Activated naive CD4-positive, alpha-beta T cell treated with anti-CD3 and anti-CD28 coated beads, Interleukin-2, amount 10 ng/mL, durations not matched to agents 7 days and 5 days (primary cell): ENCODE measurements at regions of chr4 and their contacts with region 1.

Region 1: GRCh38 chr4:40325189-40326019 is 9.7 kb upstream of the CHRNA9 start:
- DNase-seq: peak; percentile 79
- H3K4me3 Mint-ChIP-seq: no peak overlapping the region
- H3K27ac Mint-ChIP-seq: no peak overlapping the region
- H3K4me1 Mint-ChIP-seq: peaks cover 38% of the 10 kb centered on the region
- H3K27me3 Mint-ChIP-seq: peaks cover 6% of the 10 kb centered on the region

Region 2: GRCh38 chr4:40056716-40057585 is 268.5 kb before region 1 on chr4 and contains the start of gene N4BP2:
- CTCF ChIA-PET with region 1: interaction called, 10 read pairs
- DNase-seq: peak; percentile 76
- H3K4me3 Mint-ChIP-seq: peak within 1 kb of the TSS; percentile 96
- H3K27ac Mint-ChIP-seq: peak within 1 kb of the TSS; percentile 98
- H3K4me1 Mint-ChIP-seq: peaks cover 44% of the 10 kb centered on the region
- H3K27me3 Mint-ChIP-seq: peaks cover 5% of the 10 kb centered on the region

Region 3: DNA sequence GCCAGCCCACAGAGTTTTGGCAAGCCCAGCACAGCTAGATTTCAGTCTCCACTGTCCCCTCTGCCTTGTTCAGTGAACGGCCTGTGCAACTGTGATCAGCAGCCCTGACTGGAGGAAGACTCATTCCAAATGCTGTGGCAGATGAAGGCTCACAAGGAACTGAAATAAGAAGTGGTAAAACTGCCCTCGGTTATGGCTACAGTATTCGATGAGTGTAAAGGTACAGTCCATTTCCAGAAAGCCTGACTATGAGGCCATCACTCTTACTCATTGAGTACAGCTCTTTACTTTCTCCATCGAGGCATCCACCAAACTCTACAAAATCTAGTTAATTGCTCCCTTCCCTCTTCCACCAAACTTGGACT is 59.5 kb before region 1 on chr4:
- CTCF ChIA-PET with region 1: no interaction called
- DNase-seq: no peak
- H3K4me3 Mint-ChIP-seq: no peak overlapping the region
- H3K27ac Mint-ChIP-seq: peak overlapping the region; percentile 81
- H3K4me1 Mint-ChIP-seq: peaks cover 55% of the 10 kb centered on the region
- H3K27me3 Mint-ChIP-seq: no peaks in the 10 kb centered on the region

Region 4: DNA sequence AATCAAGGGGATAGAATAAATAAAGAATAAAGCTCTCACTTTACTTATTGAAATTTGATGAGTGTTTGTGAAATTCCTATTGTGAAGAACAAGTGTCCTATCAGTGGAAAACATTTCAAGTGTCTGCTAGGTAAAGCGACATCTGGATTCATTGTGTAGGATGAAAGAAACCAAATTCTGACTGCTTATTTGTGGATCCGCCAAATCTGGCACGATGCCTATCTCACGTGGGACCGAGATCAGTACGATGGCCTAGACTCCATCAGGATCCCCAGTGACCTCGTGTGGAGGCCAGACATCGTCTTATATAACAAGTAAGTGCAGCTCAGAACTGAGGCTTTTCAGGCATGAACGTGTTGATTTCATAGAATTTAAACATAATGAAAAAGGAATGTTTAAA is 11.6 kb after region 1 on chr4:
- CTCF ChIA-PET with region 1: interaction called, 11 read pairs
- DNase-seq: no peak
- H3K4me3 Mint-ChIP-seq: no peak overlapping the region
- H3K27ac Mint-ChIP-seq: no peak overlapping the region
- H3K4me1 Mint-ChIP-seq: peaks cover 15% of the 10 kb centered on the region
- H3K27me3 Mint-ChIP-seq: peaks cover 28% of the 10 kb centered on the region

Region 5: GRCh38 chr4:40348000-40348399 is 22.6 kb after region 1 on chr4:
- CTCF ChIA-PET with region 1: no interaction called
- DNase-seq: no peak
- H3K4me3 Mint-ChIP-seq: no peak overlapping the region
- H3K27ac Mint-ChIP-seq: no peak overlapping the region
- H3K4me1 Mint-ChIP-seq: peaks cover 14% of the 10 kb centered on the region
- H3K27me3 Mint-ChIP-seq: peaks cover 12% of the 10 kb centered on the region

Region 6: GRCh38 chr4:40719008-40719623 is 393.7 kb after region 1 on chr4:
- CTCF ChIA-PET with region 1: interaction called, 22 read pairs
- DNase-seq: no peak
- H3K4me3 Mint-ChIP-seq: no peak overlapping the region
- H3K27ac Mint-ChIP-seq: no peak overlapping the region
- H3K4me1 Mint-ChIP-seq: peaks cover 21% of the 10 kb centered on the region
- H3K27me3 Mint-ChIP-seq: peaks cover 4% of the 10 kb centered on the region